ENCODE measurements at regions of chr22 and their contacts with region 1.

Region 1: GRCh38 chr22:18035740-18036139 is 11.4 kb upstream of the MICAL3 start:
- DNase-seq: peak; percentile 53

Region 2: GRCh38 chr22:17684245-17684644 is 351.5 kb before region 1 on chr22:
- intact Hi-C with region 1: loop called in 1 of 2 experiments (anchors 5 kb)
- DNase-seq: no peak

Region 3: GRCh38 chr22:17830043-17830961 is 205.4 kb before region 1 on chr22:
- intact Hi-C with region 1: loop called in 1 of 2 experiments (anchors 5 kb)
- DNase-seq: peak; percentile 94

Region 4: GRCh38 chr22:18070556-18071306 is 35.0 kb after region 1 on chr22:
- intact Hi-C with region 1: loop called in 1 of 2 experiments (anchors 5 kb)
- DNase-seq: peak; percentile 52

Measured in posterior vena cava (tissue), 2 donors.